MCF 10A (cell line): ENCODE measurements at regions of chr9 and their contacts with region 1.

Region 1: DNA sequence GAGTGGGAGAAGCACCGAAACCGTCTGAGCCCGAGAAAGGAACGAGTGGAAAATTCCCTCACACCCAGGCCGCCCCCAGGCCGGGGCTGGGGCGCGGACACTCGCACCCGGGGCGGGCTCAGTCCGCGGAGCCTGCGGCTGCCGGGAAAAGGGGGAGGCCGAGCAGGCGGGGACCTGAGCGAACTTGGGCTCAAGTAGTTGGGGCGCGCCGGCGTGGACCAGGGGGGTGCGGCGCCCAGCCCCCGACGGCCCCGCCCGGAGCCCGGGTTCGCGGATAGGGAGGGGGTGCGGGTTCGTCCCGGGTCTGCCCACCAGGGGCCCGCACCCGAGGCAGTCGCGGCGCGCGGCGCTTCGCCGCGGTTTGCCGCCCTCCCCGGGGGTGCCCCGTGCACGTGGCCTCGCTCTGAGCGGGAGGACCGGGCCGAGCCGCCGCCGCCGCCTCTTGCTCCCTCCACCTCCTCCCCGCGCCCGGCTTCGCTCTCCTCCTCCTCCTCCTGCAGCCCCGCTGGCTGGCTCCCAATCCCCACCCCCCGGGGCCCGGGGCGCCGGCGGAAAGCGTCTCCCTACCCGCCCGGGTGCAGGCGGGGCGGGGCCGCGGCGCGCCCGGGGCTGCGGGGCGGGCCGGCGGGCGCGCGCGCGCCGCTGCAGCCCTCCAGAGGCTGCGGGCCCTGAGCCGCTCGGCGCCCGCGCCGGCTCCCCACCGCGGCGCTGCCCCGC is 1.1 kb upstream of the NFIB start:
- DNase-seq: peak; percentile 93
- H3K4me3 Mint-ChIP-seq: peak overlapping the region; percentile 80
- H3K27ac Mint-ChIP-seq: peak overlapping the region; percentile 88
- H3K4me1 Mint-ChIP-seq: peaks cover 40% of the 10 kb centered on the region
- H3K27me3 Mint-ChIP-seq: no peaks in the 10 kb centered on the region
- CTCF ChIP-seq: no peak

Region 2: DNA sequence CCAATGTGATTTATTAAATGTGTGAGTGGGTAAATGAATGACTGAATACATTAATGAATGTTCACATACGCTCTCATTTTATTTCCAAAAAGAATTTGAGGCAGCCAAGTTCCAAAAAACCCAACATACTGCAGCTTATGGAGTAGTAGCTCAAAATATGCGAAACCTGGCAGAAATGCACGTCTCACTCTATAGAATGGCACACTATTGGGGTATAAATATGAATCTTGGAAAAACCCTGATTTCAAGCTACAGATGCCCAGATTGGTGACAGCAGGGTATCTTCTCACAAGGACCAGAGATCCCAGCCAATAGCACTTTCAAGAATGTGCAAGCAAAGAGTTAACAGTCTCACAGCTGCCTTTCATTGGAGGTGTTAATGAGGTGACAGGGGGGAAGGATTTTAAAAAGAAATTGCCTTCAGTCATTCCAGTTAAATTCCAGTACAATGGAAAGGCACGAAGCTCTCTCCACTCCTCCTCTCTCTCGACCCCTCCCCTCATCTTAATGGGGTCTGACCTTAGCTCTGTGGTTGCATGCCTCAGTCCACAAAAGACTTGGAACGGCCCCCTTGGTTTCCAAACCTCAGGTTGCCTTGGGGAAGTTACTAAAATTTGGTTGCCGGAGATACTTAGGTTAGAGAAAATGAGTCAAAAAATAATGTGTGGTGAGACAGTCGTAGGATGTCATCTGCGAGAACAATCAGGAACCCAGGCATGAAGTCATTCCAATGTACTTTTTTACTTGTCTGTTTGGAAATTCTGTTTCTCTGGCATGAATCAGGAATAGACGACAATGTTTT is 308.5 kb before region 1 on chr9:
- CTCF ChIA-PET with region 1: no interaction called
- POLR2A ChIA-PET with region 1: no interaction called
- intact Hi-C with region 1: no loop called
- DNase-seq: no peak
- H3K4me3 Mint-ChIP-seq: no peak overlapping the region
- H3K27ac Mint-ChIP-seq: no peak overlapping the region
- H3K4me1 Mint-ChIP-seq: no peaks in the 10 kb centered on the region
- H3K27me3 Mint-ChIP-seq: no peaks in the 10 kb centered on the region
- CTCF ChIP-seq: no peak

Region 3: DNA sequence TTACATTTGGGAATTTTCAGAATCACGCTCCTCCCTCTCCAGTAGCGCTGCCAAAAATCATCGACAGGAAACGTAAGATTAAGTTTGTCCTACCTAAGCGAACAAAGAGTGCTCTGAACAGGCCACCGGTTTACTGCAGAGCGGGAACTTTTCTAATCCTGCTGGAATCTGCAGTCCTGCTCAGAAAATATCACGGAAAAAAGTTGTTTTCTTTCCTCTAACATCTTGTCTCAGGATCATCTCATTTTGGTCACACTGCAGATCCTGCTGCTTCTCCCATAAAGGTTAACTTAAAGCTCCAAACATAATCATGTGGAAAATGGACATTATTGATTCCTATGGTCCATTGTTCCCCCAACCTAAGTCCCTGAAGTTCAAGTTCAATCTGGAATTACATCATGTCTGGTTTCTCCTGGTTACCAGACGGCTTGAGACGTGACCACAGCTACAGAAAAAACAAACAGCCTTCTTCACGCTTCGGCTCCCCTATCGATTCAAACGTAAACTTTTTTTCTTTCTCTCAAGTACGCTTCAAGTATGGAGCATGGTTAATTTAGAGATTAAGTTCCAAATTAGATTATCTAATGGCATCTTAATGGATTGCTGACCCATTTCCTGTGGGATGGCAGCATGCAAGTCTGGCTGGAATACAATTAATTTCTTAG is 218.7 kb before region 1 on chr9:
- CTCF ChIA-PET with region 1: no interaction called
- POLR2A ChIA-PET with region 1: interaction called, 4 read pairs
- intact Hi-C with region 1: loop called (anchors 5 kb)
- DNase-seq: peak; percentile 72
- H3K4me3 Mint-ChIP-seq: peak overlapping the region; percentile 63
- H3K27ac Mint-ChIP-seq: peak overlapping the region; percentile 80
- H3K4me1 Mint-ChIP-seq: peaks cover 29% of the 10 kb centered on the region
- H3K27me3 Mint-ChIP-seq: no peaks in the 10 kb centered on the region
- CTCF ChIP-seq: no peak

Region 4: GRCh38 chr9:14180093-14180959 is 134.8 kb before region 1 on chr9:
- CTCF ChIA-PET with region 1: no interaction called
- POLR2A ChIA-PET with region 1: interaction called, 13 read pairs
- intact Hi-C with region 1: loop called (anchors 2 kb)
- DNase-seq: no peak
- H3K4me3 Mint-ChIP-seq: peak overlapping the region; percentile 77
- H3K27ac Mint-ChIP-seq: peak overlapping the region; percentile 63
- H3K4me1 Mint-ChIP-seq: peaks cover 34% of the 10 kb centered on the region
- H3K27me3 Mint-ChIP-seq: no peaks in the 10 kb centered on the region
- CTCF ChIP-seq: no peak

Region 5: GRCh38 chr9:14238552-14238951 is 76.5 kb before region 1 on chr9:
- CTCF ChIA-PET with region 1: interaction called, 3 read pairs
- POLR2A ChIA-PET with region 1: interaction called, 6 read pairs
- intact Hi-C with region 1: loop called (anchors 5 kb)
- DNase-seq: peak; percentile 86
- H3K4me3 Mint-ChIP-seq: peak overlapping the region; percentile 66
- H3K27ac Mint-ChIP-seq: peak overlapping the region; percentile 84
- H3K4me1 Mint-ChIP-seq: peaks cover 42% of the 10 kb centered on the region
- H3K27me3 Mint-ChIP-seq: no peaks in the 10 kb centered on the region
- CTCF ChIP-seq: no peak

Region 6: DNA sequence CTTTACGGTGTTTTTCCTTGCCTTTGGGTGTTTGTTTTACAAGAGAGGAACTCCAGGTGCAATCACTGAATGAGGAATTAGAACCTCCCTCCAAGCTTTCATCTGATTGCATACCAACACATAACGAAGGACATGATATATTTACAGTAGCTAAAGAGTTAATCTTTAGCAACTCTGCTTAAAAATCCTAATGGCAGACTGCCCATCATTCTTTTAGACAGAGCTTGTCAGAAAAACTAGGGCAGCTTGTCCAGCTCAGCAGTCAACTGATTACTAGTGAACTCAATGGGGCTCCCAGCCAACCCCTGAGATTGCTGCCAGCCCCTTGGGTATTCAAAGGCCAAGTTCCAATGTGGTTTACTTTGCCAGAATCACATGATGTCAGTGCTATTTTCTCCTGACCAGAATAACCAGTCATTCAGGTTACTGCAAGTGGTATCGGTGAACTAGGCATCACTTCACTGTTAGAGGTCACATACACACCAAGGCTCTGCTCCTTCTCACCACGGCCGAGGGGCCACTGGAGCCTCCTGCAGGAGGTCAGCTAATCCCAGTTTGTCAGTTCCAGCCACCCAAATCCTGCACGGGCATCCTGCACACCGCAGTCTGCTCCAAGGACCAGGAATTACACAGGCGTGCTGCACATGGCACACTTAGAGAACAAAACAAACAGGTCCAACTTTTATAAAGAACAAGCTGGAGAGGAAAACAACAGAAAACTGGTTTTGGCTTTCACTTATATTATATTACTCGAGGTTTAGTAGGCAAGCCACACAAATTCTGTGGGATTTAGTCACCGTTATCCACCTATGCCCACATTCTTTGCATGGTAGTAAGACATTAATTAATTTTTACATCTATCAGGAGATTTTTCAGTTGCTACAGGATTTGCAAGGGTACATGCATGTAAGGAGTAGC is 63.7 kb before region 1 on chr9:
- CTCF ChIA-PET with region 1: no interaction called
- POLR2A ChIA-PET with region 1: interaction called, 7 read pairs
- intact Hi-C with region 1: loop called (anchors 5 kb)
- DNase-seq: peak; percentile 84
- H3K4me3 Mint-ChIP-seq: peak overlapping the region; percentile 48
- H3K27ac Mint-ChIP-seq: no peak overlapping the region
- H3K4me1 Mint-ChIP-seq: peaks cover 43% of the 10 kb centered on the region
- H3K27me3 Mint-ChIP-seq: no peaks in the 10 kb centered on the region
- CTCF ChIP-seq: no peak

Region 7: DNA sequence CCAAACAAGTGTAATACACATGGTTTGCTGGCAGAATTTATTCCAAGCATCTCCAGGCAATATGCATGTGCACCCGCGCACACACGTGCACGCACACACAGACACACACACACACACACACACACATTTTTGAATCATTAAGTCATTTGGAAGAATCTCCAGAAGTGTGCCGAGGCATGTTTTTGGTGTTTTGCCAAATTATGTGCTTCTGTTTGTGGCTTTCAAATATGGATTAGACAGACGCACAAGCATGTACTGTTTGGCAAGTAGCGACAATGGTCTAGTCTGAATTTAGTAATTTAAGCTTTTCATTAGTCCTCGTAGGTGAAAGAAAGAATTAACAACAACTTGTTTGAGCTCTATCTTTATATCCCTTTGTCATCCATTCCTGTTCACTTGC is 37.8 kb before region 1 on chr9:
- CTCF ChIA-PET with region 1: no interaction called
- POLR2A ChIA-PET with region 1: interaction called, 16 read pairs
- intact Hi-C with region 1: no loop called
- DNase-seq: peak; percentile 83
- H3K4me3 Mint-ChIP-seq: peak overlapping the region; percentile 54
- H3K27ac Mint-ChIP-seq: peak overlapping the region; percentile 63
- H3K4me1 Mint-ChIP-seq: peaks cover 71% of the 10 kb centered on the region
- H3K27me3 Mint-ChIP-seq: no peaks in the 10 kb centered on the region
- CTCF ChIP-seq: no peak

Region 8: DNA sequence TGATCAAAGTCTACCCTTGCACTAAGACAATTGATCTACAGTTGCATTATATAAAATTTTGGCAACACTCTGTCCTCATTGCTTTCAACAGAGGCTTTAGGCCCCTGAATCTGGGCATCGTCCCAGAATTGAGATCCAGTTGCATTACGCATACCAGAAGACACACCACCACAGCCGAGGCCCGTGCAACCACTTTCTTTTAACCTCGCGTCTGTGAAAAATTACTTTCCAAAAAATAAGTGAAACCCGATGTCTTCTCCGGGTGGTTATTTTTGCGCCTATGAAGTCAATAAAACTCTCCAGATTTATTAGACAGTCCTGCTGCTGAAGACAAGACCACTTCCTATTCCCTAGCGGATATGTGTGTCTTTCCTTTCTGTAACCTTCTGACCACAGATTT is 51.0 kb after region 1 on chr9:
- CTCF ChIA-PET with region 1: no interaction called
- POLR2A ChIA-PET with region 1: no interaction called
- intact Hi-C with region 1: no loop called
- DNase-seq: no peak
- H3K4me3 Mint-ChIP-seq: no peak overlapping the region
- H3K27ac Mint-ChIP-seq: no peak overlapping the region
- H3K4me1 Mint-ChIP-seq: no peaks in the 10 kb centered on the region
- H3K27me3 Mint-ChIP-seq: no peaks in the 10 kb centered on the region
- CTCF ChIP-seq: no peak